Aorta (tissue), 5 donors: ENCODE measurements at regions of chr3 and their contacts with region 1.

Region 1: DNA sequence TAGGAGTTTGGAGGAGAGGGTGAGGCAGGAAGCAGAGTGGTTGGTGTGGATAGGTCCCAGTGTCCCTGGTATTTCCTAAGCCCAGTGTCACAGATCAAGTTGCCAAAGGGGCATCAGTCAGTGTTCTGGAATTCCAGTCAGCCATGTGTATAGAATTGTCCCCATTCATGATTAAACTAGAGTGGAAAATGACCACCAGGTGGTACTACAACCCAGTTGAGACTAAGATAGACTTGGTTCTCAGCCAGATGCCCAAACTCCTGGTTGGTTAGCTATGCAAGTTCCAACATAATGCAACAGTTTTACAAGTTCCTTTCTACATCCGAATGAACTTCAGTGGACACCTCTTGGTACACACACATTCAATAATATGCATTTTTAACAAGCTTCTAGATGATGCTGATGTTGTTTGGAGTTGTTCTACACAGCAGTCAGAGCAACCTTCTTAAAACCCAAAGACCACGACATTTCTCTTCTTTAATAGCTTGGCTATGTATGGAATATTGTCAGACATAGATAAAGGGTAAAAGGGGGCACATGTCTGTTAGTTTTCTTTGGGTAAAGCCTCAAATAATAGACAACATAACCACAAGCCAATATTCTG is 8.4 kb upstream of the ATR start:
- DNase-seq: no peak
- ATAC-seq: peak; percentile 66
- H3K4me3 ChIP-seq: no peak overlapping the region
- H3K27ac ChIP-seq: no peak overlapping the region
- H3K4me1 ChIP-seq: no peaks in the 10 kb centered on the region
- H3K27me3 ChIP-seq: no peaks in the 10 kb centered on the region

Region 2: GRCh38 chr3:142808103-142808917 is 221.4 kb after region 1 on chr3:
- intact Hi-C with region 1: loop called in 1 of 2 experiments (anchors 10 kb)
- DNase-seq: no peak
- ATAC-seq: no peak
- H3K4me3 ChIP-seq: no peak overlapping the region
- H3K27ac ChIP-seq: no peak overlapping the region
- H3K4me1 ChIP-seq: no peaks in the 10 kb centered on the region
- H3K27me3 ChIP-seq: no peaks in the 10 kb centered on the region

Region 3: DNA sequence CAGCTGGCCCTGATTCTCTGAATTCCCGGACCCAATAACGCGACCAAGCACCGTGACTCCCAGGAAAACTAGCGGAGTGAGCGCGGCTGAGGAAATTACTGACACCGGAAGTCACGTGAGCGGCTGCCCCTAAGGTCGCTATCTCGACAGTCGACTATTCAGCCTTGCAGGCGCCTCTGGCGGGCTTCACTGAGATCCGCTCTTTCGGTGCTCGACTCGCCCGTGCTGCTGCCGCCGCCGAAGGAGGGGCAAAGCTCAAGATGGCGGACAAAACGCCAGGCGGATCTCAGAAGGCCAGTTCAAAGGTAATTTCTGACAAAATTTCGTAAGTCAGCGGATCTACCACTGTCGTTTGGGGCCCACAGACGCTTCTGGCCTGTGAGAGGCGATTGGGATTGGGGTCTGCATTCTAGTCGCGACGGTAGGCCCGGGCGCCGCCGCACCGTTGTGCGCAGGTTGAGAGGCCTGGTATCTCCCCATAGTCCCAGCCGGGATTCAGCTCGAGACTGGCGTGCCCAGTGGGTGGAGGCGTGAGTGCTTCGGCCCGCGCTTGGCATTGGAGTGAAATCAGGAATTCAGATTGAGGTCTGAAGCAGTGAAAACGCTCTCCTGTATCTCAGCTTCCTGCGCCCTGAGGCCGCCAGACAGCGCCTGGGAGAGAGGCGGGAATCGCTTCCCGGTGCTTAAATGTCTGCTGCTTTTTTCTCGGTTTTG is 414.6 kb after region 1 on chr3 and contains the start of gene U2SURP:
- intact Hi-C with region 1: loop called in 1 of 2 experiments (anchors 5 kb)
- DNase-seq: peak; percentile 97 to 98
- ATAC-seq: peak; percentile 99
- H3K4me3 ChIP-seq: peak within 1 kb of the TSS; percentile 80 to 94
- H3K27ac ChIP-seq: peak within 1 kb of the TSS; percentile 65 to 89
- H3K4me1 ChIP-seq: peaks cover 0 to 2% of the 10 kb centered on the region in 2 donors
- H3K27me3 ChIP-seq: no peaks in the 10 kb centered on the region
- total RNA-seq, gene U2SURP: 84.0 to 102 TPM